ENCODE measurements at regions of chr13 and their contacts with region 1.

Region 1: DNA sequence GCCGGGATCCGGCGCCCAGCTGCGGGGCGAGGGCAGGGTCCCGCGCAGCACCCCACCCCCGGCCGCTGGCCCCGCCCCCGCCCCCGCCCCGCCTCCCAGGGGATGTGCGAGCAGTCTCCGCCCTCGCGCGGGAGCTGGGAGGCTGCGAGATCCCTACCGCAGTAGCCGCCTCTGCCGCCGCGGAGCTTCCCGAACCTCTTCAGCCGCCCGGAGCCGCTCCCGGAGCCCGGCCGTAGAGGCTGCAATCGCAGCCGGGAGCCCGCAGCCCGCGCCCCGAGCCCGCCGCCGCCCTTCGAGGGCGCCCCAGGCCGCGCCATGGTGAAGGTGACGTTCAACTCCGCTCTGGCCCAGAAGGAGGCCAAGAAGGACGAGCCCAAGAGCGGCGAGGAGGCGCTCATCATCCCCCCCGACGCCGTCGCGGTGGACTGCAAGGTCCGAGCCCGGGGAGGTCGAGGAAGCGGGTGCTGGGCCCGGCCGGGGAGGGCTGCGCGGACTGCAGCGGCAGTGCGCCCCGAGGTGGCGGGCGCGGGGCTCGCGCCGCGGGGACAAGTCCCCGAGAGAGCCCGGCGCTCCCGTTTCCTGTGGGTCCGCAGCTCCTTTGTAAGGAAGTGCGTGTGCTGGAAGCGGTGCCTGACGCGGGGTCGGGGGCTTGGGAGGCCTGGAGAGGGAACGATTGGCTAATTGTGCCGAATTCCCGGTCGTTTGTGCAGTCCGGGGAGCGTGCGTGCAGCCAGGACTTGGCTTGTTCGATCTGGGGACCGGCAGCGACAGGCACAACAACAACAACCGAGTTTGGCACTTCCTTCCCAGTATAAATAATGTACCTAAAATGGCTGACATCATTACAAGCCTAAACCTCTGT is at the start of gene ITM2B:
- DNase-seq: peak; percentile 48 to 78 (median 73)
- ATAC-seq: peak; percentile 71 to 72
- H3K4me3 Mint-ChIP-seq: peak within 1 kb of the TSS; percentile 84 to 99 (median 96)
- H3K27ac Mint-ChIP-seq: peak within 1 kb of the TSS; percentile 97 to 99 (median 99)
- H3K4me1 Mint-ChIP-seq: peaks cover 28 to 67% (median 54%) of the 10 kb centered on the region in 4 donors
- H3K27me3 Mint-ChIP-seq: no peaks in the 10 kb centered on the region
- polyA plus RNA-seq, gene ITM2B: 1,063 to 1,292 (median 1,234) TPM

Region 2: GRCh38 chr13:48126944-48127830 is 106.1 kb before region 1 on chr13:
- POLR2A ChIA-PET with region 1: interaction called, 46 read pairs
- DNase-seq: peak in 9 of 10 donors; percentile 10 to 82 (median 47)
- ATAC-seq: peak; percentile 85 to 91
- H3K4me3 Mint-ChIP-seq: peak overlapping the region; percentile 34 to 78 (median 62)
- H3K27ac Mint-ChIP-seq: peak overlapping the region; percentile 88 to 97 (median 94)
- H3K4me1 Mint-ChIP-seq: peaks cover 14 to 31% (median 25%) of the 10 kb centered on the region in 4 donors
- H3K27me3 Mint-ChIP-seq: no peaks in the 10 kb centered on the region

Region 3: GRCh38 chr13:48155848-48156247 is 77.4 kb before region 1 on chr13:
- POLR2A ChIA-PET with region 1: interaction called, 85 read pairs
- DNase-seq: peak in 9 of 10 donors; percentile 17 to 79 (median 56)
- ATAC-seq: peak; percentile 75 to 87
- H3K4me3 Mint-ChIP-seq: peak overlapping the region; percentile 57 to 89 (median 78)
- H3K27ac Mint-ChIP-seq: peak overlapping the region; percentile 93 to 99 (median 97)
- H3K4me1 Mint-ChIP-seq: peaks cover 46 to 95% (median 86%) of the 10 kb centered on the region in 4 donors
- H3K27me3 Mint-ChIP-seq: no peaks in the 10 kb centered on the region

Region 4: DNA sequence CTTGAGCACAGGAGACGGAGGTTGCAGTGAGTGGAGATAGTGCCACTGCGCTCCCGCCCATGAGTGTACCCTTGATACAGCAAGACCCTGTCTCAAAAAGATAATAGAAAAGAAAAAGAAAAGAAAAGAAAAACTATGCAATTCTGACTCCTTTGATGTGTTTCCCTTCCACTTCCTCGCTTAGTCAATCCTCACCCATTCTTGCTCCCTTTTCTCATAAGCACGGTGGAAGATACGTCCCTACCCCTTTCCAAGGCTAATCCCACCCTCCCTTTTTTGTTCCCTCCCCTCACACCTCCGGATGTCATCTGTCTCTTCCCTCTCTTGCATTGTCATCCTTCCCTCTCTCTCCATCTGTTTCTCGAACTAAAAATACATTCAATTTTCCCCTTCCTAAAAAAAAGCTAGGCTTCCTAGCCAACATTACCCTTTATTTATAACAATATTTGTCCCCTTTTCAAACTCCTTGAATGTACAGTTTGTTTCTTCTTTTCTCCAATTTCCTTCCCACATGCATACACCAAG is 40.8 kb before region 1 on chr13:
- POLR2A ChIA-PET with region 1: interaction called, 83 read pairs
- DNase-seq: no peak
- ATAC-seq: no peak
- H3K4me3 Mint-ChIP-seq: peak overlapping the region in 1 of 10 donors; percentile 71
- H3K27ac Mint-ChIP-seq: peak overlapping the region in 9 of 10 donors; percentile 26 to 87 (median 78)
- H3K4me1 Mint-ChIP-seq: peaks cover 27 to 56% (median 49%) of the 10 kb centered on the region in 4 donors
- H3K27me3 Mint-ChIP-seq: no peaks in the 10 kb centered on the region

Region 5: DNA sequence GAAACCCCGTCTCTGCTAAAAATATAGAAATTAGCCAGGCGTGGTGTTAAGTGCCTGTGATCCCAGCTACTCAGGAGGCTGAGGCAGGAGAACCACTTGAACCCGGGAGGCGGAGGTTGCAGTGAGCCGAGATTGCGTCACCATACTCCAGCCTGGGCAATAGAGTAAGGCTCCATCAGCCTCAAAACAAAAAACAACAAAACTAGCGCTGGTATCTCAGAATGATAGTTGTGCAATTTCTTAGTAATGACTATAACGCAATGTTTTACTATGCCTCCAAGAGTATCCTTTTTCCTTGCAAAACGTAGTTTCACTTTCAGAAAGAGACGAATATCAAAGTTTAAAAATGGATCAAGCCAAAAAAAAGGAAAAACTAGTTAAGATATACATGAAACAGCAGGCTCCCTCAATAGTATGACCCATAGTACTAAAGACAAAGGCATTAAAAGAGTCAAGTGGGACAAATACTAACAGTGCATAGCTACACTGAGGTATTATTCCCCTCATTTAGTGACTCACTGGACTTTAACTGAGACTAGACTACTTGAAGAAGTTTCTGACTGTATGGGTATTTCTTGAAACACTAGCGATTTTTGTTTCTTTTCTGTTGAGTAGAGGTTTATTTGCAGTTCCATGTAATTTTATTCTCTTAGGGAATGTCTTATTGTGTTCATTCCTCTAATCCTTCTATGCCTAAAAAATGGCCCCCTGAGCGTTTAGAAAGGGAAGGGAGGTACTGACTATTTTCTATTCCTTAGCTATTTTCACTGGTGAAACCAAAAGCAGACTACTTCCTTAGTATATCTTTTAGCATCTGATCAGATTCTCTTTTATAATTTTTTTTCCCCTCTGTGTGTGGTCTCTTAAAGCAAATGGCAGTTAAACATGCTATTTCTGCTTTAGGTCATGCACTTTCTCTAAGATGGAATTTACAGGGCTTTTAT is 10.6 kb before region 1 on chr13:
- POLR2A ChIA-PET with region 1: interaction called, 113 read pairs
- DNase-seq: peak in 2 of 10 donors; percentile 35 to 44
- ATAC-seq: peak; percentile 29 to 43
- H3K4me3 Mint-ChIP-seq: peak overlapping the region; percentile 31 to 89 (median 82)
- H3K27ac Mint-ChIP-seq: peak overlapping the region; percentile 94 to 99 (median 97)
- H3K4me1 Mint-ChIP-seq: peaks cover 31 to 79% (median 68%) of the 10 kb centered on the region in 4 donors
- H3K27me3 Mint-ChIP-seq: no peaks in the 10 kb centered on the region

Region 6: DNA sequence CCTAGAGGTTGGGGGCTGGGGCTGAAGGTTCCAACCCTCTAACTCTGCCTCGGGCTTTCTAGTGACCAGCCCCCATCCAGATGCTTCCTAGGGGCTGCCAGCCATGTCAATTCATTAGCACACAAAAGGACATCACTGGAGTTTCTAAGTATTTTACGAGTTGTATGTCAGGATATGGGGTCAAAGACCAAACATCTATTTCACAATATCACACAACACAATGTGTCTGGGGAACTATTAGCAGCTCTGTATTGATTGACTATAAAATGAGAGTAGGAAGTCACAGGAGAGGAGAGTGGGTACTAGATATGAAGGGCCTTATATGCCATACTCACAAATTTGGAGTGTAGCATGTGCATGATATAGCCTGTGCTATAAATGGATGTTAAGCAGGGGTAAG is 137.5 kb after region 1 on chr13:
- POLR2A ChIA-PET with region 1: no interaction called
- DNase-seq: no peak
- ATAC-seq: no peak
- H3K4me3 Mint-ChIP-seq: no peak overlapping the region
- H3K27ac Mint-ChIP-seq: peak overlapping the region in 1 of 10 donors; percentile 15
- H3K4me1 Mint-ChIP-seq: peaks cover 0 to 2% (median 0%) of the 10 kb centered on the region in 4 donors
- H3K27me3 Mint-ChIP-seq: no peaks in the 10 kb centered on the region

Measured in naive thymus-derived CD8-positive, alpha-beta T cell (primary cell).